ENCODE measurements at regions of chr7 and their contacts with region 1.

Region 1: DNA sequence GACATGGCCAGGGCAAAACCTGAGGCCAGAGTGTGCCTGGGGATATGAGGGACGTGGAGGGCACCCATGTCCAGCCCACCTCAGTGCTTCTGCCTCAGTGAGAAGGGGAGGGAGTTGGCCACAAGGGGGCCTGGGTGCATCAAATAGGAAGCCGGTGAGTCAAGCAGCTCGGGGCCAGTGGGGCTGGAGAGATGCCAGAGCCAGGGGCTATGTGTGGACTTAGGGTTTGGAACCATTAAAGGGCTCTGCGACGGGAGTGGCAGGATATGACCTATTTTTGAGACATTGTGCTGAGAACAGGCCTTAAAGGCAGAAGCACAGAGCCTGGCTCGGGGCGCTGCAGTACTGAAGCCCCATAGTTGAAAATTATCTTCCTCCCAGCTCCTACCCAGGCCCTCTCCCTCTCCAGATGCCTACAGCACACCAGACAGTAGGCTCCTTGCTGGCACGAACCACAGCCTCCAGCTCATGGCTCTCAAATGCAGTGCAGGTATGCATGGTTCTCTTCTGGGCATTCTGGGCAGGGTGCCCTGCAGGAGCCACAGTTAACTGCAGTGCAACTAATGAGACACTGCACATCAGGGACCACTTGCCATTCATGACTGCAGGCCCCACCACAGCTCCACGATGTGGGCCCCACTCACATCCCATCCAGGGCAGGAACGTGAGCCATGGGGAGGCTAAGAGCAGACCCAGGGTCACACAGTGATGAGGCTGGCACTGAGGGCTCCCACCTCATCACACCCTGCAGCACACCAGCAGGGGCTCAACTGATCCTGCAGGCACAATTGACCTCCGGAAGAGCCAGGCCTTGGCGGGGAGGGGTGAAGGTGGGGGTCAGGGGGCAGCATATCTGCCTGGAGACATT is 7.2 kb upstream of the PGAM2 start:
- DNase-seq: peak; percentile 82
- H3K4me3 ChIP-seq: peak overlapping the region; percentile 44
- H3K27ac ChIP-seq: peak overlapping the region; percentile 93
- H3K4me1 ChIP-seq: peaks cover 73% of the 10 kb centered on the region
- H3K27me3 ChIP-seq: no peaks in the 10 kb centered on the region
- CTCF ChIP-seq: peak; percentile 76

Region 2: GRCh38 chr7:44196450-44196872 is 123.9 kb after region 1 on chr7:
- intact Hi-C with region 1: loop called (anchors 5 kb)
- DNase-seq: no peak
- H3K4me3 ChIP-seq: no peak overlapping the region
- H3K27ac ChIP-seq: no peak overlapping the region
- H3K4me1 ChIP-seq: peaks cover 8% of the 10 kb centered on the region
- H3K27me3 ChIP-seq: peaks cover 39% of the 10 kb centered on the region
- CTCF ChIP-seq: peak; percentile 77

Measured in left ventricle myocardium inferior (tissue), 1 donor.